Right cardiac atrium (tissue), 5 donors: ENCODE measurements at regions of chr18 and their contacts with region 1.

Region 1: DNA sequence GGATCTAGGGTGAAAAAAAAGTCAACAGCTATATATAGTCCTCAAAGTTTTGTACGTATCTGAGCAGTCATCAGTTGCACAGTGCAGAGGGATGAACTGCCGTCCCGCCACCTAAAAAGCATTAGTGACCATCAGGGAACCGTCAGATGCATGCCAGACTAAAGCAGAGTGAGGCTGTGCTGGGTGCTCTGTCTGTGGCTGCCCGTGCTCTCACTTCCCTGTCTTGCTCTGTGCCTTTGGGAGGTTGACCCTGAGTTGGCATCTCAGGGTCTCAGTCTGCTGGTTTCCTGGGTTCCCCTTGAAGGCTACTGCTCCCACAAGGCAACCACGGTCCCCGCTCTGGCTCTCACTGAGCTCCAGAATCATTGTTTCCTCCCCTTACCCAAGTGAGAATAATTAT is 11.1 kb downstream of the CLUL1 start:
- DNase-seq: peak in 1 of 3 donors; percentile 42
- ATAC-seq: no peak
- H3K4me3 ChIP-seq: no peak overlapping the region
- H3K27ac ChIP-seq: no peak overlapping the region
- H3K4me1 ChIP-seq: peaks cover 4% of the 10 kb centered on the region
- H3K27me3 ChIP-seq: no peaks in the 10 kb centered on the region

Region 2: DNA sequence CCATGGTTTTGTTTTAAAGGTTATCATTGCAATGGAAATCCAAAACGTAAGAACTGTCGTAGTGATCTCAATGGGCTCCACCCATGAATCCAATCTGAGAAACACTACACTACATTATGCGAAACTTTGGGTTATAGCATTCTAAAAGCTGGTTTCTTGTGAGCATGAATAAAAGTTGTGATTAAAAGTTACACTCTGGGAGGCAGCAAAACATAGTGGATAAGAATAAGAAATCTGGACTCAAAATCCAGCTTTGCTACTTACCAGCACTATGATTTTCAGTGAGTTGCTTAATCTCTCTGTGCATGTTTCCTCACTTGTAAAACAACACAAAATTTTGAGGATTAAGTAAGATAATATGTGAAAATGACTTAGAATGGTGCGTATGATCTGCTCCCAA is 314.4 kb before region 1 on chr18:
- intact Hi-C with region 1: loop called in 2 of 4 experiments (anchors 5 to 10 kb)
- DNase-seq: no peak
- ATAC-seq: peak in 1 of 2 donors; percentile 40
- H3K4me3 ChIP-seq: no peak overlapping the region
- H3K27ac ChIP-seq: no peak overlapping the region
- H3K4me1 ChIP-seq: no peaks in the 10 kb centered on the region
- H3K27me3 ChIP-seq: no peaks in the 10 kb centered on the region